Naive thymus-derived CD4-positive, alpha-beta T cell (primary cell): ENCODE measurements at regions of chr17 and their contacts with region 1.

Region 1: DNA sequence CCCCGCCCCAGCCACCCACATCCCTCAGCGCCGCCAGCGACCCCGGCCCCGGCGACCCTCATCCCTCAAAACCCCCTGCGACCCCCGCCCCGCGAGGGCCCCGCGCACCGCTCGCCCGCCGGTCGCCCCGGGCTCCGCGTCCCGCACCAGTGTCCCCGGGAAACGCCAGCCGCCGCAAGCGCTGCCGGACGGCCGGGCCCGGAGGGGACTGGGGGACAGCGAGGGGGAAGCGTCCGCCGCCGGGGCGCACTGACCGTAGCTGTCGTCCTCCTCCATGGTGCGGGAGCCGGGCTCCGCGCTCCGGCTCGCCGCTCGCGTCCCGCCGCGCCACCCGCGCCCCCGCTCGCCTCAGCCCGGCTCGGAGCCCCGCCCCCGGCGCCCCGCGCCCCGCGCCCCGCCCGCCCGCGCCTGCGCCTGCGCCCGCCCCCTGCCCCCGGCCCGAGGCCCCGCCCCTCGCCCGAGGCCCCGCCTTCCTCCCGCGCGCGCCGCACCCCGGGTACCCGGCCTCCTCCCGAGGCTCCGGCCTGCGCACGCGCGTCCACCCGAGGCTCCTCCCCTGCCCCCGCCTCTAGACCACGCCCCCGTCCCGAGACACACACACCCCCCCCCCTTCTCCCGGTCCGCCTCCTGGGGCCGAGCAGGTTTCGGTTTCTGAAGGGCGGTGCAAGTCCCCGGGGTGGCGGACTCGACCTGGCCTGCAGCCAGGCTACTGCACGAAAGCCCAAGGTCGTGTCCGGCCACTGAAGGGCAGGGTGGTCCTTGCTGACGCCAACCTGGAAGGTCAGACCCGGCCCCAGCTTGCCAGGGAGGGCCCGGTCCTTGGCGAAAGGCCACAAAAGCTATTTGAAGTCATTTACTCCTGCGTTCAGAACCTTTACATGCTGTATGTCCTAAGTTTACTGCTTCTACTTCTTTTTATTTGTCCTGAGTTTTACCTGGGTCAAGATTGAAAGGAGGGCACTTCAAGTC is at the start of gene CYTH1:
- DNase-seq: peak; percentile 94 to 100 (median 96)
- ATAC-seq: peak; percentile 92
- H3K4me3 ChIP-seq: peak within 1 kb of the TSS; percentile 96
- H3K4me3 Mint-ChIP-seq: peak within 1 kb of the TSS; percentile 88 to 99 (median 94)
- H3K27ac ChIP-seq: peak within 1 kb of the TSS; percentile 95
- H3K27ac Mint-ChIP-seq: peak within 1 kb of the TSS; percentile 91 to 99 (median 96)
- H3K4me1 ChIP-seq: peaks cover 51 to 53% of the 10 kb centered on the region in 2 donors
- H3K4me1 Mint-ChIP-seq: peaks cover 25 to 64% (median 58%) of the 10 kb centered on the region in 7 donors
- H3K27me3 ChIP-seq: no peaks in the 10 kb centered on the region
- H3K27me3 Mint-ChIP-seq: no peaks in the 10 kb centered on the region
- total RNA-seq, gene CYTH1: 297 to 452 (median 420) TPM

Region 2: DNA sequence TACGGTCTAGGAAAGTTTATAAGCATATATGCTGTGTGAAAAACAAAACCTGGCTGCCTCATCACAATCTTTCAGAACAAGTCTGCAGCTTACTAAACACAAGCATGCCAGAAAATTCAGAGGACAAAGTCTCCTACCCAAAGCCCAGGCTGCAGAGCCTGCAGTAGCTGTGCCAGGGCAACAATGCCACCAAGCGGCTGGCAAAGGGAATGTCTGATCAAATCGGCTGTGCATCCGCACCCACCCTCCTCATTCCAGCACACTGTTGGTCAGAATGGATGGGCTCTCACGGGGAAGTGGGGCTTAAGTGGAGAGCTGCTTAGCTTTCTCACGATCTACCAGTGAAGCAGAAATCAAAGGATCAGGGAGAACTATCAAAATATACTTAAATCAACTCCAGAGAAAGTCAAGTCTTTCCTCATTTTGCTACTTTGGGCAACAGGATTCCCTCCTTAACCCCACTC is 73.7 kb before region 1 on chr17:
- CTCF ChIA-PET with region 1: interaction called, 8 read pairs
- POLR2A ChIA-PET with region 1: interaction called, 10 read pairs
- intact Hi-C with region 1: no loop called
- DNase-seq: peak; percentile 33 to 69 (median 58)
- ATAC-seq: peak; percentile 84
- H3K4me3 ChIP-seq: no peak overlapping the region
- H3K4me3 Mint-ChIP-seq: peak overlapping the region in 9 of 10 donors; percentile 30 to 80 (median 67)
- H3K27ac ChIP-seq: peak overlapping the region; percentile 56
- H3K27ac Mint-ChIP-seq: peak overlapping the region; percentile 30 to 95 (median 87)
- H3K4me1 ChIP-seq: peaks cover 35 to 39% of the 10 kb centered on the region in 2 donors
- H3K4me1 Mint-ChIP-seq: peaks cover 28 to 73% (median 64%) of the 10 kb centered on the region in 7 donors
- H3K27me3 ChIP-seq: no peaks in the 10 kb centered on the region
- H3K27me3 Mint-ChIP-seq: no peaks in the 10 kb centered on the region

Region 3: DNA sequence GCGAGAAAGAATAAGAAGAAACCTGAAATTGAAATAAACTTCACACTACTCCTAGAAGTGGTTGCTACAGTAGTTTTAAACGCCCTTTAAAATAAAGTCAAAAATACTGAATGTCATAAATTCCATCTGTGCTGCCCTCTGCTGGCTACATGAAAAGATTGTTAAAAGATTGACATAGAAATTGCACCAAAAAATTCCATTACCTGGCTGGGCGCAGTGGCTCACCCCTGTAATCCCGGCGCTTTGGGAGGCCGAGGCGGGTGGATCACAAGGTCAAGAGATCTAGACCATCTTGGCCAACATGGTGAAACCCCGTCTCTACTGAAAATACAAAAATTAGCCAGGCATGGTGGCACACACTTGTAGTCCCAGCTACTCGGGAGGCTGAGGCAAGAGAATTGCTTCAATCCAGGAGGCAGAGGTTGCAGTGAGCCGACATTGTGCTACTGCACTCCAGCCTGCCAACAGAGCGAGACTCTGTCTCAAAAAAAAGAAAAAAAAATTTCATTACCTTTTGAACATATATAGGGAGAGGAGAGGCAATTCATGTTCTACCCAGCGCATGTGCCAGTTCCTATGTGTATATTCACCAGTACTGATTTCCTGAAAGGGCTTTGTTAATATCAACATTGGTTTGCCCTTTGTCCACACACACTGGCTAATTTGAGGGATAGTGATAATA is 36.7 kb before region 1 on chr17:
- CTCF ChIA-PET with region 1: interaction called, 6 read pairs
- POLR2A ChIA-PET with region 1: interaction called, 43 read pairs
- intact Hi-C with region 1: loop called (anchors 1 kb)
- DNase-seq: peak in 7 of 9 donors; percentile 48 to 67 (median 56)
- ATAC-seq: peak; percentile 13
- H3K4me3 ChIP-seq: peak overlapping the region; percentile 6
- H3K4me3 Mint-ChIP-seq: peak overlapping the region; percentile 53 to 93 (median 86)
- H3K27ac ChIP-seq: peak overlapping the region; percentile 81
- H3K27ac Mint-ChIP-seq: peak overlapping the region; percentile 62 to 98 (median 95)
- H3K4me1 ChIP-seq: peaks cover 92 to 94% of the 10 kb centered on the region in 2 donors
- H3K4me1 Mint-ChIP-seq: peaks cover 77 to 100% (median 93%) of the 10 kb centered on the region in 7 donors
- H3K27me3 ChIP-seq: no peaks in the 10 kb centered on the region
- H3K27me3 Mint-ChIP-seq: no peaks in the 10 kb centered on the region

Region 4: GRCh38 chr17:78759203-78759968 is 22.8 kb before region 1 on chr17:
- CTCF ChIA-PET with region 1: interaction called, 3 read pairs
- POLR2A ChIA-PET with region 1: interaction called, 24 read pairs
- intact Hi-C with region 1: loop called (anchors 1 kb)
- DNase-seq: peak; percentile 56 to 96 (median 93)
- ATAC-seq: peak; percentile 91
- H3K4me3 ChIP-seq: peak overlapping the region; percentile 53
- H3K4me3 Mint-ChIP-seq: peak overlapping the region; percentile 64 to 85 (median 80)
- H3K27ac ChIP-seq: peak overlapping the region; percentile 93
- H3K27ac Mint-ChIP-seq: peak overlapping the region; percentile 83 to 98 (median 97)
- H3K4me1 ChIP-seq: peaks cover 75 to 77% of the 10 kb centered on the region in 2 donors
- H3K4me1 Mint-ChIP-seq: peaks cover 43 to 88% (median 83%) of the 10 kb centered on the region in 7 donors
- H3K27me3 ChIP-seq: no peaks in the 10 kb centered on the region
- H3K27me3 Mint-ChIP-seq: no peaks in the 10 kb centered on the region

Region 5: GRCh38 chr17:78798695-78799559 is 16.7 kb after region 1 on chr17:
- CTCF ChIA-PET with region 1: interaction called, 15 read pairs
- POLR2A ChIA-PET with region 1: interaction called, 13 read pairs
- intact Hi-C with region 1: loop called in 1 of 2 experiments (anchors 1 kb)
- DNase-seq: peak in 5 of 9 donors; percentile 54 to 65 (median 59)
- ATAC-seq: peak; percentile 56
- H3K4me3 ChIP-seq: no peak overlapping the region
- H3K4me3 Mint-ChIP-seq: peak overlapping the region in 8 of 10 donors; percentile 11 to 60 (median 45)
- H3K27ac ChIP-seq: no peak overlapping the region
- H3K27ac Mint-ChIP-seq: peak overlapping the region; percentile 68 to 95 (median 86)
- H3K4me1 ChIP-seq: peaks cover 7 to 27% of the 10 kb centered on the region in 2 donors
- H3K4me1 Mint-ChIP-seq: peaks cover 42 to 78% (median 63%) of the 10 kb centered on the region in 7 donors
- H3K27me3 ChIP-seq: no peaks in the 10 kb centered on the region
- H3K27me3 Mint-ChIP-seq: no peaks in the 10 kb centered on the region

Region 6: GRCh38 chr17:78818932-78819331 is 36.7 kb after region 1 on chr17:
- CTCF ChIA-PET with region 1: no interaction called
- POLR2A ChIA-PET with region 1: interaction called, 11 read pairs
- intact Hi-C with region 1: loop called in 1 of 2 experiments (anchors 2 kb)
- DNase-seq: peak in 7 of 9 donors; percentile 76 to 89 (median 86)
- ATAC-seq: peak; percentile 72
- H3K4me3 ChIP-seq: peak overlapping the region; percentile 37
- H3K4me3 Mint-ChIP-seq: peak overlapping the region; percentile 68 to 85 (median 78)
- H3K27ac ChIP-seq: peak overlapping the region; percentile 88
- H3K27ac Mint-ChIP-seq: peak overlapping the region; percentile 94 to 99 (median 96)
- H3K4me1 ChIP-seq: peaks cover 42 to 47% of the 10 kb centered on the region in 2 donors
- H3K4me1 Mint-ChIP-seq: peaks cover 36 to 76% (median 56%) of the 10 kb centered on the region in 7 donors
- H3K27me3 ChIP-seq: no peaks in the 10 kb centered on the region
- H3K27me3 Mint-ChIP-seq: no peaks in the 10 kb centered on the region